Mammary epithelial cell (primary cell): ENCODE measurements at regions of chr2 and their contacts with region 1.

Region 1: DNA sequence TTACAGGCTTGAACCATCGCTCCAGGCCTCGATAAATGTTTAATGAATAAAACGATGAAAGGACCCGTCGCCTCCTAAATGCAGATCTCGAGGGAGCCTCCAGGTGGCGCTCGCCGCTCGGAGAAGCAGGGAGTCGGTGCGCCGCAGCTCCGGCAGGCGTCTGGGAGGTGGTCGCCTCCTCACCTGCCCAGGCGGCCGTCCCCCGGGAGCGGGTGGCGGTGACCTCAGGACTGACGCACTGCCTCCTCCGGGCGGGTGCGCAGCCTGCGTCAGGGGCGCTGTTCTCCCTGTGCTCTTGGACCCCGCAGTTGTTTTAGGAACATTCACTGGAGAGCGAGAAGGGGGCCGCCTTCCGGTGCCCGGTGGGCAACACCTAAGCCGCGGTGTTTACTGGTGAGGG is 38.6 kb upstream of the POLE4 start:
- DNase-seq: peak; percentile 26
- H3K4me3 ChIP-seq: peak overlapping the region; percentile 9 to 46 (median 44)
- H3K27ac ChIP-seq: no peak overlapping the region
- H3K4me1 ChIP-seq: peaks cover 31% of the 10 kb centered on the region
- H3K27me3 ChIP-seq: no peaks in the 10 kb centered on the region
- CTCF ChIP-seq: peak; percentile 68 to 73

Region 2: GRCh38 chr2:74887445-74887951 is 32.3 kb before region 1 on chr2:
- CTCF ChIA-PET with region 1: no interaction called
- dilution Hi-C with region 1: no loop called
- in situ Hi-C with region 1: no loop called
- intact Hi-C with region 1: loop called (anchors 2 kb)
- DNase-seq: peak; percentile 93
- H3K4me3 ChIP-seq: peak overlapping the region in 1 of 3 experiments; percentile 3
- H3K27ac ChIP-seq: peak overlapping the region; percentile 69
- H3K4me1 ChIP-seq: peaks cover 39% of the 10 kb centered on the region
- H3K27me3 ChIP-seq: no peaks in the 10 kb centered on the region
- CTCF ChIP-seq: no peak

Region 3: DNA sequence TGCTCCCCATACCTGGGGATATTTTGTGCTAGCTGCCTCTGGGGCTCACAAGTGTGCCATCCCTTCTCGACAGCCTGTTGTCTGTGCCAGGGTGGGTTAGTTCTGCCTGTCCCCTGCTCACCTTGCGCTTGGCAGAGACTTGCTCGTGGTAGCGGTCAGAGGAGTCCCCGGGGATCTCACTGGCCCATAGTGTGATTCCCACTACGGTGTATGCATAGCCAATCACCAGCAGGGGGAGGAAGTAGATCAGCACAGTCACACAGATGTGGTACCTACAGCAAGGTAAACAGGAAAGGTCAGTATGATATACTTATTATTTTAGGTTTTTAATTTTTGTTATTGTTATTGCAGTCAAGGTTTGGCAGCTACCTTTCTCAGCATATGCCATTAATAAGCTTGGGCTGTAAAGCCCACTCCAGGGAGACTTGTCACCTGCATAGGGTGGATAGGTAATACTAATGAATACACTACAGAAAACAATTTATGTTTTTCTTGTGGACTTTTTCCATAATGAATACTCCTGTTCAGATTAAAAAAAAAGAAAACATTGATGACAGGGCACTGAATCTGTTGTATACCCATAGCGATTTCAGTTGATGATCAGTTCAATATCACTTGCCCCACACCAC is 133.8 kb after region 1 on chr2:
- CTCF ChIA-PET with region 1: no interaction called
- dilution Hi-C with region 1: no loop called
- in situ Hi-C with region 1: no loop called
- intact Hi-C with region 1: loop called (anchors 1 kb)
- DNase-seq: peak; percentile 24
- H3K4me3 ChIP-seq: no peak overlapping the region
- H3K27ac ChIP-seq: no peak overlapping the region
- H3K4me1 ChIP-seq: no peaks in the 10 kb centered on the region
- H3K27me3 ChIP-seq: no peaks in the 10 kb centered on the region
- CTCF ChIP-seq: peak; percentile 76 to 90

Region 4: GRCh38 chr2:75146606-75147332 is 226.9 kb after region 1 on chr2:
- CTCF ChIA-PET with region 1: no interaction called
- dilution Hi-C with region 1: no loop called
- in situ Hi-C with region 1: no loop called
- intact Hi-C with region 1: loop called (anchors 10 kb)
- DNase-seq: no peak
- H3K4me3 ChIP-seq: no peak overlapping the region
- H3K27ac ChIP-seq: no peak overlapping the region
- H3K4me1 ChIP-seq: no peaks in the 10 kb centered on the region
- H3K27me3 ChIP-seq: no peaks in the 10 kb centered on the region
- CTCF ChIP-seq: no peak

Region 5: GRCh38 chr2:75403991-75404428 is 484.2 kb after region 1 on chr2:
- CTCF ChIA-PET with region 1: no interaction called
- dilution Hi-C with region 1: no loop called
- in situ Hi-C with region 1: no loop called
- intact Hi-C with region 1: loop called (anchors 1 kb)
- DNase-seq: peak; percentile 35
- H3K4me3 ChIP-seq: no peak overlapping the region
- H3K27ac ChIP-seq: no peak overlapping the region
- H3K4me1 ChIP-seq: no peaks in the 10 kb centered on the region
- H3K27me3 ChIP-seq: peaks cover 3% of the 10 kb centered on the region
- CTCF ChIP-seq: peak; percentile 76 to 85